CD4-positive, alpha-beta memory T cell (primary cell): ENCODE measurements at regions of chr11 and their contacts with region 1.

Region 1: DNA sequence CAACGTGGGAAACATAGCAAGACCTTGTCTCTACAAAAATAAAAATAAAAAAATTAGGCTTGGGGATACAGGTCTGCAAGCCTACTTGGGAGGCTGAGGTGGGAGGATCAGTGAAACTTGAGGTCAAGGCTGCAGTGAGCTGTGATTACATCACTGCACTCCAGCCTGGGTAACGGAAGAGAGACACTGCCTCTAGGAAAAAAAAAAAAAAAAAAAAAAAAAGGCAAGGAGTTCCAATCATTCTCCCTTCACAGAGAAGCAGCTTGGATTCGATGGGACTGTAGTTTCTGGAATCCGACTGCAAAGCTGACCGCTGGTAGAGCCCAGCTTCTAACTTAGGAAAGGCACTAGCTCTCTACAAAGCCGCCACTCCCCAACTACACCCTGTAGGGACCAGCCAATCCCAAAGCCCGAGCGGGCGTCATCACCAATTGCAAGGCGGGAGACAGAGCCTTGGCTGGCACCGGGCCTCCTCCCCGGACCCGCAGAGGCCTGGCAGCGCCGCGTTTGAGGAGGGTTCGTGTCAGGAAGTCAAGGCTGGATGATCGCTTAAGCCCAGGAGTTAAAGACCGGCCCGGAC is 699 bp upstream of the DDB2 start:
- DNase-seq: peak; percentile 79 to 88 (median 80)
- H3K4me3 ChIP-seq: peak overlapping the region; percentile 57 to 95
- H3K4me3 Mint-ChIP-seq: peak overlapping the region; percentile 99 to 100 (median 99)
- H3K27ac ChIP-seq: peak overlapping the region; percentile 81
- H3K27ac Mint-ChIP-seq: peak overlapping the region; percentile 98 to 100 (median 99)
- H3K4me1 ChIP-seq: peaks cover 37% of the 10 kb centered on the region
- H3K4me1 Mint-ChIP-seq: peaks cover 23 to 39% (median 28%) of the 10 kb centered on the region in 4 donors
- H3K27me3 ChIP-seq: no peaks in the 10 kb centered on the region
- H3K27me3 Mint-ChIP-seq: no peaks in the 10 kb centered on the region

Region 2: GRCh38 chr11:46611526-46612304 is 602.4 kb before region 1 on chr11:
- CTCF ChIA-PET with region 1: no interaction called
- POLR2A ChIA-PET with region 1: no interaction called
- intact Hi-C with region 1: no loop called
- DNase-seq: no peak
- H3K4me3 ChIP-seq: no peak overlapping the region
- H3K4me3 Mint-ChIP-seq: no peak overlapping the region
- H3K27ac ChIP-seq: no peak overlapping the region
- H3K27ac Mint-ChIP-seq: no peak overlapping the region
- H3K4me1 ChIP-seq: peaks cover 25% of the 10 kb centered on the region
- H3K4me1 Mint-ChIP-seq: peaks cover 6 to 22% (median 16%) of the 10 kb centered on the region in 4 donors
- H3K27me3 ChIP-seq: no peaks in the 10 kb centered on the region
- H3K27me3 Mint-ChIP-seq: no peaks in the 10 kb centered on the region

Region 3: GRCh38 chr11:46865340-46865739 is 348.7 kb before region 1 on chr11:
- CTCF ChIA-PET with region 1: no interaction called
- POLR2A ChIA-PET with region 1: no interaction called
- intact Hi-C with region 1: no loop called
- DNase-seq: no peak
- H3K4me3 ChIP-seq: no peak overlapping the region
- H3K4me3 Mint-ChIP-seq: no peak overlapping the region
- H3K27ac ChIP-seq: no peak overlapping the region
- H3K27ac Mint-ChIP-seq: no peak overlapping the region
- H3K4me1 ChIP-seq: no peaks in the 10 kb centered on the region
- H3K4me1 Mint-ChIP-seq: no peaks in the 10 kb centered on the region
- H3K27me3 ChIP-seq: no peaks in the 10 kb centered on the region
- H3K27me3 Mint-ChIP-seq: peaks cover 3 to 5% of the 10 kb centered on the region in 2 donors

Region 4: DNA sequence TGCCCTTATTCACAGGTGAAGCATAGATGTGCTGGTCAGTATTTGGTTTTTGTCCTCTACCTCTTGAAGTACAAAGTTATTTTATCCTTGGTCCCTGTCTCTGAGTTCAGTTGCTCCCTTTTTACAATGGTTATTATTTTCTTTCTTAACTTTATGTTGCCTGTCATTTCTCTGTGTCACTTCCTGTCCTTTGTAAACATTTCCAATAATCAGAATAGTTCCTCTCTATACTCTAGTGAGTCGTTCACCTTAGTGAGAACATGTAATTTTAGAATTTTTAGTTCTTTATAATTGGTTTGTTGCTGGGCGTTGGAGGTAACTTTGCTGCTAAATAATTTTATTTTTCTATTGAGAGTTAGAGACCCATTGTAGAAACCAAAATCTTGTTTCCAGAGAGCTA is 261.5 kb before region 1 on chr11:
- CTCF ChIA-PET with region 1: no interaction called
- POLR2A ChIA-PET with region 1: no interaction called
- intact Hi-C with region 1: no loop called
- DNase-seq: no peak
- H3K4me3 ChIP-seq: no peak overlapping the region
- H3K4me3 Mint-ChIP-seq: no peak overlapping the region
- H3K27ac ChIP-seq: no peak overlapping the region
- H3K27ac Mint-ChIP-seq: peak overlapping the region in 2 of 7 donors; percentile 21 to 66
- H3K4me1 ChIP-seq: peaks cover 8% of the 10 kb centered on the region
- H3K4me1 Mint-ChIP-seq: peaks cover 0 to 8% (median 3%) of the 10 kb centered on the region in 4 donors
- H3K27me3 ChIP-seq: no peaks in the 10 kb centered on the region
- H3K27me3 Mint-ChIP-seq: no peaks in the 10 kb centered on the region

Region 5: GRCh38 chr11:47186076-47186936 is 27.8 kb before region 1 on chr11 and contains the start of gene PACSIN3:
- CTCF ChIA-PET with region 1: interaction called, 8 read pairs
- POLR2A ChIA-PET with region 1: interaction called, 22 read pairs
- intact Hi-C with region 1: loop called (anchors 2 kb)
- DNase-seq: peak; percentile 15 to 36 (median 24)
- H3K4me3 ChIP-seq: peak within 1 kb of the TSS; percentile 47 to 49
- H3K4me3 Mint-ChIP-seq: peak within 1 kb of the TSS; percentile 71 to 88 (median 84)
- H3K27ac ChIP-seq: no peak within 1 kb of the TSS
- H3K27ac Mint-ChIP-seq: peak within 1 kb of the TSS in 3 of 7 donors; percentile 15 to 61 (median 55)
- H3K4me1 ChIP-seq: peaks cover 21% of the 10 kb centered on the region
- H3K4me1 Mint-ChIP-seq: peaks cover 4 to 7% (median 5%) of the 10 kb centered on the region in 4 donors
- H3K27me3 ChIP-seq: peaks cover 11% of the 10 kb centered on the region
- H3K27me3 Mint-ChIP-seq: peaks cover 7 to 11% of the 10 kb centered on the region in 2 donors
- total RNA-seq, gene PACSIN3: 1.3 TPM in 1 of 2 experiments, not detected in the other

Region 6: DNA sequence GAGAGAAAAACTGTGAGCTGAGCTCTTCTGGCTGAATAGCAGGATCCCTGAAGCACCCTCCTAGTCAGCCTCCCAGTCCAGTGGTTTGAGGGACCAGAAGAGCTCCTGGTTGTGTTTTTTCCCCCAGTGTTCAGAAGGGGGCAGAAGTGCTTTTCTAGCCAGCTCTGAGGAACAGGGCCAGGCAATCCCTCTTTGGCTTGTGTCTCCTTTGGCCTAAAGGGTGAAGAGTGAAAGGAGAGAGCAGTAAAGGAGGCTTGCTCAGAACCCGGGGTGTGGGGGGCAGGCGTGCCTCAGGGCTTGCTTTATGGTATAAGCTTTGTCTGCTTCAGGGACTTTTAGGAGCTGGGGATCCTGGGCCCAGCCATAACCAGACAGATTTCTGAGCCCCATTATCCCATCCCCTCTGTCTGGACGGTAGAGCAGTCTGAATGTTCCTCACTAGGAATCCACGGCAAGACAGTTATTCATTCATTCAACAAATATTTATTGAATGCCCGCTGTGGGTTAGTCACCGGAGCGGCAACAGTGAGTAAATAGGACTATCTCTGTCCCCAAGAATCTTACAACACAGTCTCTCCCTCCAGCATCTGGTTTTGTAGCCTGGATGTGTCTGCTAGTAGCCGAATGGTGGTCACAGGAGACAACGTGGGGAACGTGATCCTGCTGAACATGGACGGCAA is 20.1 kb after region 1 on chr11:
- CTCF ChIA-PET with region 1: interaction called, 19 read pairs
- POLR2A ChIA-PET with region 1: interaction called, 61 read pairs
- intact Hi-C with region 1: loop called (anchors 1 kb)
- DNase-seq: peak in 4 of 5 donors; percentile 11 to 61 (median 21)
- H3K4me3 ChIP-seq: no peak overlapping the region
- H3K4me3 Mint-ChIP-seq: peak overlapping the region; percentile 56 to 82 (median 70)
- H3K27ac ChIP-seq: peak overlapping the region; percentile 75
- H3K27ac Mint-ChIP-seq: peak overlapping the region; percentile 92 to 99 (median 97)
- H3K4me1 ChIP-seq: peaks cover 25% of the 10 kb centered on the region
- H3K4me1 Mint-ChIP-seq: peaks cover 7 to 32% (median 23%) of the 10 kb centered on the region in 4 donors
- H3K27me3 ChIP-seq: no peaks in the 10 kb centered on the region
- H3K27me3 Mint-ChIP-seq: no peaks in the 10 kb centered on the region

Region 7: DNA sequence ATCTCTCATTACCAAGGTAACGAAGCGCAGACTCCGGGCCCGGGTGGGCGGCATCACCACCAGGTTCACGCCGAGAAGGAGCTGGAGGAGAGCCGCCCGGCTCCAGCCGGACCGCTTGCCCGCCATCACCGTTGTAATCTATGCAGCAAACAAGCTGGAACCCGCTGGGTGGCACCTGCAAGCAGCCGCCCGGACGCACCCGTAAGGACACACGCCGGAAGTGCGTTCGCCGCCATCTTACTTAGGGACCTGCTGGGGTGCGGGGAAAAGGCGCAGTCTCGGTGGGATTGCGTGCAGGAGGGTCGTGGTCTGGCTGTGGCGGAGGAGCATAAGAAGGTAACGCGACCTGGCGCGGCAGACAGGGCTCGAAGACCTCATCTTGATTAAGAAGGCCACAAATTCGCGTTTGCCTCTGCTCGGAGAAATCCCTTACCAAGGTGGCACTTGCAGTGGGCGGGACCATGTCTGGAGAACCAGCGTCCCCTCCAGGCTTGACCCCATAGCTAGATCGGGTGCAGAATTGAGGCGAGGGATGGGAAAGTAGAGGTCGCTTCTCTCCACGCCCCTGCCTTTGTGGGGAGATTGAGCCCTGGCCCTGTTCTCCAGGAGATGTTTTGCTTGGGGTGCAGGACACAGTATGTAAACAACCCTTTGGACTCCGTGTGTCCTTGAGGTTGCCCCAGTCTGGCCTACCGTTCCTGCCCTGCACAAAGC is 34.7 kb after region 1 on chr11 and contains the start of gene ACP2:
- CTCF ChIA-PET with region 1: interaction called, 14 read pairs
- POLR2A ChIA-PET with region 1: interaction called, 92 read pairs
- intact Hi-C with region 1: loop called (anchors 1 kb)
- DNase-seq: peak; percentile 87 to 90 (median 87)
- H3K4me3 ChIP-seq: peak within 1 kb of the TSS; percentile 89 to 94
- H3K4me3 Mint-ChIP-seq: peak within 1 kb of the TSS; percentile 99 to 100 (median 99)
- H3K27ac ChIP-seq: peak within 1 kb of the TSS; percentile 75
- H3K27ac Mint-ChIP-seq: peak within 1 kb of the TSS; percentile 91 to 99 (median 99)
- H3K4me1 ChIP-seq: peaks cover 20% of the 10 kb centered on the region
- H3K4me1 Mint-ChIP-seq: peaks cover 12 to 29% (median 20%) of the 10 kb centered on the region in 4 donors
- H3K27me3 ChIP-seq: no peaks in the 10 kb centered on the region
- H3K27me3 Mint-ChIP-seq: no peaks in the 10 kb centered on the region
- total RNA-seq, gene ACP2: 23.6 to 23.7 TPM

Region 8: DNA sequence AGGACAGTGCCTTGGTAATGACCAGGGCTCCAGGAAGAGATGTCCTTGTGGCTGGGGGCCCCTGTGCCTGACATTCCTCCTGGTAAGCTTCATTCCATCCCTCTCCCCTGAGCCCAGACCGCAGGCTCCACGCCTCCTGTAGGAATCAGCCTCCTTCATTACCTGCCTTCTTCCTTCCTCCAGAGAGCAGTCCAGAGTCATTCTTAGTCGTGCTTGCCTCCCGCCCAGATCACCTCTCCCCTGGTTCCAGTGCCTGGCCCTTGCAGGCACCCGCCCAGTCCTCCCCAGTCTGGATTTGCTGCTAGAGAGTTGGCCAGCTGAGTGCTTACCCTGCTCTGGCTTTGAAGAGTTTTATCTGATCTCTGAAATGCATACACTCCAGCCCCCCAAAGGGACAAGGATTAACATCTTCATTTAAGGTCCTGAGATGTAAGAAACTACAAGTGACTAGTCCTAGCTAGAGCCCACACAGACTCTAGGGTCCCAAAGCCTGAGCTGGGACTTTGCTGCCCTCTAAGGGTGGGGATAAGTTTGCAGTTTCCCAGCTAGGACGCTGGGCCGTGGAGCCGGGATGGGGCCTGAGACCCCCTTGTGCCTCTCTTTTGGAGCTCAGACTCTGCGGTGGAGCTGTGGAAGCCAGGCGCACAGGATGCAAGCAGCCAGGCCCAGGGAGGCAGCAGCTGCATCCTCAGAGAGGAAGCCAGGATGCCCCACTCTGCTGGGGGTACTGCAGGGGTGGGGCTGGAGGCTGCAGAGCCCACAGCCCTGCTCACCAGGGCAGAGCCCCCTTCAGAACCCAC is 45.3 kb after region 1 on chr11:
- CTCF ChIA-PET with region 1: interaction called, 9 read pairs
- POLR2A ChIA-PET with region 1: interaction called, 11 read pairs
- intact Hi-C with region 1: no loop called
- DNase-seq: peak in 1 of 5 donors; percentile 26
- H3K4me3 ChIP-seq: no peak overlapping the region
- H3K4me3 Mint-ChIP-seq: no peak overlapping the region
- H3K27ac ChIP-seq: no peak overlapping the region
- H3K27ac Mint-ChIP-seq: peak overlapping the region in 2 of 7 donors; percentile 19 to 37
- H3K4me1 ChIP-seq: peaks cover 9% of the 10 kb centered on the region
- H3K4me1 Mint-ChIP-seq: peaks cover 0 to 5% (median 4%) of the 10 kb centered on the region in 4 donors
- H3K27me3 ChIP-seq: no peaks in the 10 kb centered on the region
- H3K27me3 Mint-ChIP-seq: no peaks in the 10 kb centered on the region

Region 9: GRCh38 chr11:47394322-47395222 is 180.5 kb after region 1 on chr11:
- CTCF ChIA-PET with region 1: no interaction called
- POLR2A ChIA-PET with region 1: interaction called, 13 read pairs
- intact Hi-C with region 1: no loop called
- DNase-seq: peak; percentile 36 to 61 (median 42)
- H3K4me3 ChIP-seq: peak overlapping the region; percentile 47 to 69
- H3K4me3 Mint-ChIP-seq: peak overlapping the region; percentile 50 to 76 (median 68)
- H3K27ac ChIP-seq: peak overlapping the region; percentile 77
- H3K27ac Mint-ChIP-seq: peak overlapping the region; percentile 73 to 91 (median 89)
- H3K4me1 ChIP-seq: peaks cover 58% of the 10 kb centered on the region
- H3K4me1 Mint-ChIP-seq: peaks cover 17 to 70% (median 42%) of the 10 kb centered on the region in 4 donors
- H3K27me3 ChIP-seq: no peaks in the 10 kb centered on the region
- H3K27me3 Mint-ChIP-seq: no peaks in the 10 kb centered on the region

Region 10: DNA sequence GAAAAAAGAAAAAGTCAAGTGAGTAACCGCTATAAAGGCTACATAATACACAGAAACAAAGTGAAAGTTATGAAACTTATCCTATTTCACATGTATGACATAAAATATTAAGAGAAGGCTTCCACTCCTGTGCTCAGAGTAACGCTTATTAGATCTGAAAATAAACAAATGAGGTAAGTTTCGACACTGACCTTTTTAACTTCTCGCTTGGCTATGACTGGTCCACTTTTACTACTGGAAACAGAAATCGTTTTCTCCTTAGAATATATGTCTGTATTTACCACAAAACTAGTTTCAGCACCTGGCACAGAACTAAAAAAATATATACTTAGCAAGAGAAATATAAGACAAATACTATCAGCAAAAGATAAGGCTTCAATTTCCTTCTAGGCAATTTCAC is 536.6 kb after region 1 on chr11:
- CTCF ChIA-PET with region 1: no interaction called
- POLR2A ChIA-PET with region 1: no interaction called
- intact Hi-C with region 1: no loop called
- DNase-seq: no peak
- H3K4me3 ChIP-seq: no peak overlapping the region
- H3K4me3 Mint-ChIP-seq: no peak overlapping the region
- H3K27ac ChIP-seq: no peak overlapping the region
- H3K27ac Mint-ChIP-seq: peak overlapping the region in 1 of 7 donors; percentile 32
- H3K4me1 ChIP-seq: no peaks in the 10 kb centered on the region
- H3K4me1 Mint-ChIP-seq: peaks cover 6 to 17% (median 11%) of the 10 kb centered on the region in 4 donors
- H3K27me3 ChIP-seq: no peaks in the 10 kb centered on the region
- H3K27me3 Mint-ChIP-seq: no peaks in the 10 kb centered on the region